HEK293 (cell line): ENCODE measurements at regions of chr3 and their contacts with region 1.

Region 1: DNA sequence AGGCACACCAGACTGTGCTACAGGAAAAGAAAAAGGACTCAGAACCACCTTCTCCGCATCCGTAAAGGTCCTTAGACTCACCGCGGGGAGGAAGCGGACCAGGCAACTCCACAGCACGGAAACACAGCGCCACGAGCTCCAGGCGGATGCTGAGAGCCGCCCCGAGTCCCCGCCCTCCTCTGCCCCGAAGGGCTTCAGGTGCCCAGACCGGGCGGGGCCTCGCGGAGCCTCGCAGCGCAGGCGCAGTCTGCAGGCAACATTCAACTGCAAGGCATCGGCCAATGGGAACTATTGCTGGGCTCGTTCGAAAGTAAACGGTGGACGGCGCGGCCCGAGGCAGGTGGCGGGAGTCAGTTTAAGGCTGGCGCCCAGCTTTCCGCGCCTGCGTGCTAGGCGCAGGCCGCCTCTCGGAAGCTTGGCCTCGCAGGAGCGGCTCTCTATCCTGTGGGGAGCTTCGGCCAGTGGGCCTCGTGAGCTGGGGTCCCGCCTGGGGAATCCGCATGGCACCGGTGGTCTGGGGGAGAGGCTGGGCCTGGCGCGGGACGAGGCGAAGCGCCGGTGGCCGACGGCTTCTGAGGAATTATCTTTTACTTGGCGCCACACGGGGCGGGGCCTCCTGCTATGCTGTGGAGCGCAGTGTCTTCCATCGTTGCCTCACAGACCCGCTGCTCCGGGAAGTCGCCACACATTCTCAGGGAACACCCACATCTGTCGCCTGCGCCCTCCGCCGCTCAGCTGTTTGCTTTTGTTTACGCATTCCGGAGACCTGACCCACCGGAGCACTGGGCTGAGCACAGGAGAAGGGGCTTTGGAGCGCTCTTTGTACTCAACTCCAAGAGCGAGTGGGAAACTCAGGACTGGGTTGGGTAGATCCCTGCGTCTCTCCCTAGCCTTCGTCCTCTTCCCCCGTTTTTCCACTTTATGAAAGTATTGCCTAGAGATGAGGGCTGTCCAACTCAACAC is at the start of gene TRIM59:
- H3K4me3 ChIP-seq: peak within 1 kb of the TSS; percentile 97
- H3K27ac ChIP-seq: peak within 1 kb of the TSS; percentile 85
- H3K4me1 ChIP-seq: no peaks in the 10 kb centered on the region
- CTCF ChIP-seq: no peak

Region 2: DNA sequence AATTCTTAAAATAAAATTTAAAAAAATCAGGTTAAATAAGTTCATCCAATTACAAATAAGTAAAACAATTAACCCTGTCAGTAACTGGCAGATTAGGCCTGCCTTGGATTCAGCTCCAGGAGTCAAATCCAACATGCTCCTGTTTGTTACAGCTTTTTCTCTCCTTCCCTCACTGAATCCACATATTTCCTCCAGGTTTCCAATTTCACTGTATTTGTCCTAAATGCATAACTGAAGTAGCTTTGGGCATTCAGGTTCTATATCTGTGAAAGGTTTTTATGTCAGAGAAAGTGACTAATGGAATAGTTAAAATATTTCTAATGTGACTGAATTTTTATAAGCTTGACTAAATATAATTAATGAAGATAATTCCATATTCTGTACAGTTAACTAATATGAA is 130.6 kb before region 1 on chr3:
- CTCF ChIA-PET with region 1: no interaction called
- POLR2A ChIA-PET with region 1: no interaction called
- H3K4me3 ChIP-seq: no peak overlapping the region
- H3K27ac ChIP-seq: no peak overlapping the region
- H3K4me1 ChIP-seq: no peaks in the 10 kb centered on the region
- CTCF ChIP-seq: no peak

Region 3: DNA sequence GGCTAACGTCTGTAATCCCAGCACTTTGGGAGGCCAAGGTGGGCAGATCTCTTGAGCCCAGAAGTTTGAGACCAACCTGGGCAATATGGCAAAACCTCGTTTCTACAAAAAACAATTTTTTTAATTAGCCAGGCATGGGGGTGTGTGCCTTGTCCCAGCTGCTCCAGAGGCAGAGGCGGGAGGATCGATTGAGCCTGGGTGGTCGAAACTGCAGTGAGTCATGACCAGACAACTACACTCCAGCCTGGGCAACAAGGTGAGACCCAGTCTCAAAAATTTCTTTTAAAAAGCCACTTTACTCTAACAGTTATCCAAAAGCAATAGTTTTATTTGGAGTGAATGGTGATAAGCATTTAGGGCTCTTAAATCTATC is 12.8 kb before region 1 on chr3:
- CTCF ChIA-PET with region 1: no interaction called
- POLR2A ChIA-PET with region 1: interaction called, 22 read pairs
- H3K4me3 ChIP-seq: no peak overlapping the region
- H3K27ac ChIP-seq: no peak overlapping the region
- H3K4me1 ChIP-seq: 0 out of 2 replicates have a peak, but pooled peaks cover 2% of the 10 kb centered on the region
- CTCF ChIP-seq: no peak

Region 4: DNA sequence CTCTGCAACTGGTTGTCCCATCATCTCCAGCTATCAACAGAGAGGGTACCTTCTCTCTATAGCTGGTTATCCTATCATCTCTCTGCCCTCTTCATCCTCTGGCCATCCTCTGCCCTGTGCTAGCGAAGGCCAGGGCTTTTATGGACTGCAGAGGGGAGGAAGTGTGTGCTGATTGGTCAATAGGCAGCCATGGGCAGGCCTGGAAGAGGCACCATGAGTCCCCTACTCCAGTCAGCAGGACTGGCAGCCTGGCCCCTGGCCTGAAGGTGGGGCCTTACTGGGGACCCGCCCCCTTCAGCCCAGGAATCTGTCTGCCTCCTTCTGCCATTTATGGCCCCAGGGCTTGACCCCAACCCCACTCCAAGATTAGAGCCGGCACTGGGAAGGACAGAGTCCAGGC is 10.1 kb after region 1 on chr3:
- CTCF ChIA-PET with region 1: no interaction called
- POLR2A ChIA-PET with region 1: interaction called, 13 read pairs
- H3K4me3 ChIP-seq: no peak overlapping the region
- H3K27ac ChIP-seq: no peak overlapping the region
- H3K4me1 ChIP-seq: no peaks in the 10 kb centered on the region
- CTCF ChIP-seq: no peak

Region 5: GRCh38 chr3:160565442-160566403 is 115.8 kb after region 1 on chr3 and contains the start of gene KPNA4:
- CTCF ChIA-PET with region 1: no interaction called
- POLR2A ChIA-PET with region 1: interaction called, 13 read pairs
- H3K4me3 ChIP-seq: peak within 1 kb of the TSS; percentile 77
- H3K27ac ChIP-seq: peak within 1 kb of the TSS; percentile 87
- H3K4me1 ChIP-seq: peaks cover 5% of the 10 kb centered on the region; the same call in 1 of the 2 replicates
- CTCF ChIP-seq: no peak